ENCODE measurements at regions of chr19 and their contacts with region 1.

Region 1: DNA sequence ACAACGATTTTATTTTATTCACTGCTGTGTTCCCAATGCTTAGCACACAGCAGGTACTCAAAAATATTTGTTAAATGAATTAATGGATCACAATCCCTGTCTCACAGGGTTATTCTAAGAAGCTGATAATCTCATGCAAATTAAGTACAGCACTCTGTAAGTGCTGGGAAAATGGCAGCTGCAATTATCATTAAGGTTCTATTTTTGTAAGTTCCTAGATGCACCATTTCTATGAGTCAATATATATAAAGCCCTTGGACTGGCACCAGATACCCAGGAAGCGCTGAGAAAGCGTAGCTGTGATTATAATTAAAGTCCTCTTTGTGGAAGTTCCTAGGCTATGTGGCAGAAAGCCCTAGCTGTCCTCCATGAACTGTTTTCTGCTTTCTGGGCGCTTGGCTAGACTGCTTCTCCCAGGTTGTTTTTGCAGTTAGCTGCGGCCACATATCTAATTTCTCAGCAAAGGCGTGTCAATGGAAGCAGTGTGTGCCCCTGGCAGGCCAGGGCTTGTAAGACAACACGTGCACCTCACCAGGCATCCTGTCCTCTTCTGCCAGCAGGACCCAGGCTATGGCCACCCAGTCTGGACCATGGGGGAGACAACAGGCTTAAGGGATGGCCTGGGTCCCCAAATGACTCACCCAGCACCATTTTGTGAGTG is 5.2 kb upstream of the SRRM5 start:
- DNase-seq: no peak
- H3K4me3 ChIP-seq: no peak overlapping the region
- H3K27ac ChIP-seq: peak overlapping the region; percentile 12 to 70 (median 54)
- H3K4me1 ChIP-seq: peaks cover 0 to 23% (median 9%) of the 10 kb centered on the region in 3 donors
- H3K27me3 ChIP-seq: no peaks in the 10 kb centered on the region
- CTCF ChIP-seq: no peak
- POLR2A ChIP-seq: no peak

Region 2: DNA sequence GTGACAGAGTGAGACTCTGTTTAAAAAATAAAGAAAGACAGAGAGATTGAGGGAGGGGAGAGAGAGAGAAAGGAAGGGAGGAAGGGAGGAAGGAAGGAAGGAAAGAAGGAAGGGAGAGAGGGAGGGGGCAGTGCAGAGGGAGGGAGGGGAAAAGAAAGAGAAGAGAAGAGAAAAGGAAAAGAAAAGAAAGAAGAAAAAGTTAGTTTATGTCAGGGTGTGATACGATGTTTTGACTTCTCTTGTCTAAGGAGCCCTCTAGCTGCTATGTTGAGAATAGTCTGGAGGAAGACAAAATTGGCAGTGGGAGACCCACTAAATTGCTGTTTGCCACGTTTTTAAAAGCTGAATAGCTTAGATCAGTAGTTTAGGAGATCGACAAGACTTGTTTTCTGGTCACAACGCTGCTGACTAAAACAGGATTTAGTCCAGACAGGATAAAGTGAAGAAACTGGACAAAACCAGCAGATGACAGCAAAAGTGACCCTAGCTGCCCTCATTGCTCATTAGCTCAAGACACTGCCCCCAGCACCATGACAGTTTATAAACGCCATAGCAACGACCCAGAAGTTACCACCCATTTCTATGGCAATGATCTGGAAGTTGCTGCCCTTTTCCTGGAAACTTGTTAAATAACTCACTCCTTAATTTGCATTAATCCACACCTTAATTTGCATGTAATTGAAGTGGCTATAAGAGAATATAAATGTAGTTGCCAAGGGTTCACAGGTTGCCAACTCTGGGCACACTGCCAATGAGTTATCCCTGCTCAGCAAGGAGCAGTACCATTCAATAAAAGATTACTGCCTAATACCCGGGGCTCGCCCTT is 180.9 kb before region 1 on chr19:
- intact Hi-C with region 1: no loop called
- DNase-seq: no peak
- H3K4me3 ChIP-seq: peak overlapping the region in 1 of 4 donors; percentile 9
- H3K27ac ChIP-seq: peak overlapping the region; percentile 26 to 80 (median 73)
- H3K4me1 ChIP-seq: peaks cover 4 to 46% (median 17%) of the 10 kb centered on the region in 3 donors
- H3K27me3 ChIP-seq: no peaks in the 10 kb centered on the region
- CTCF ChIP-seq: peak; percentile 23 to 66 (median 45)
- POLR2A ChIP-seq: no peak

Region 3: GRCh38 chr19:43651758-43652545 is 45.3 kb after region 1 on chr19:
- intact Hi-C with region 1: loop called (anchors 10 kb)
- DNase-seq: no peak
- H3K4me3 ChIP-seq: no peak overlapping the region
- H3K27ac ChIP-seq: no peak overlapping the region
- H3K4me1 ChIP-seq: peaks cover 0 to 10% (median 0%) of the 10 kb centered on the region in 3 donors
- H3K27me3 ChIP-seq: no peaks in the 10 kb centered on the region
- CTCF ChIP-seq: peak; percentile 19 to 77 (median 76)
- POLR2A ChIP-seq: no peak

Region 4: GRCh38 chr19:43668406-43669158 is 61.9 kb after region 1 on chr19:
- intact Hi-C with region 1: no loop called
- DNase-seq: peak; percentile 92
- H3K4me3 ChIP-seq: peak overlapping the region; percentile 41 to 82 (median 60)
- H3K27ac ChIP-seq: peak overlapping the region; percentile 84 to 98 (median 94)
- H3K4me1 ChIP-seq: peaks cover 9 to 33% (median 18%) of the 10 kb centered on the region in 3 donors
- H3K27me3 ChIP-seq: no peaks in the 10 kb centered on the region
- CTCF ChIP-seq: no peak
- POLR2A ChIP-seq: peak in 2 of 4 donors; percentile 78 to 88

Region 5: GRCh38 chr19:43700395-43701000 is 93.8 kb after region 1 on chr19:
- intact Hi-C with region 1: no loop called
- DNase-seq: no peak
- H3K4me3 ChIP-seq: peak overlapping the region; percentile 0 to 48 (median 18)
- H3K27ac ChIP-seq: peak overlapping the region; percentile 58 to 77 (median 70)
- H3K4me1 ChIP-seq: peaks cover 7 to 27% (median 16%) of the 10 kb centered on the region in 3 donors
- H3K27me3 ChIP-seq: peaks cover 0 to 24% (median 0%) of the 10 kb centered on the region in 4 donors
- CTCF ChIP-seq: no peak
- POLR2A ChIP-seq: no peak

Measured in esophagus squamous epithelium (tissue), 5 donors.